Ascending aorta (tissue), 2 donors: ENCODE measurements at regions of chr16 and their contacts with region 1.

Region 1: DNA sequence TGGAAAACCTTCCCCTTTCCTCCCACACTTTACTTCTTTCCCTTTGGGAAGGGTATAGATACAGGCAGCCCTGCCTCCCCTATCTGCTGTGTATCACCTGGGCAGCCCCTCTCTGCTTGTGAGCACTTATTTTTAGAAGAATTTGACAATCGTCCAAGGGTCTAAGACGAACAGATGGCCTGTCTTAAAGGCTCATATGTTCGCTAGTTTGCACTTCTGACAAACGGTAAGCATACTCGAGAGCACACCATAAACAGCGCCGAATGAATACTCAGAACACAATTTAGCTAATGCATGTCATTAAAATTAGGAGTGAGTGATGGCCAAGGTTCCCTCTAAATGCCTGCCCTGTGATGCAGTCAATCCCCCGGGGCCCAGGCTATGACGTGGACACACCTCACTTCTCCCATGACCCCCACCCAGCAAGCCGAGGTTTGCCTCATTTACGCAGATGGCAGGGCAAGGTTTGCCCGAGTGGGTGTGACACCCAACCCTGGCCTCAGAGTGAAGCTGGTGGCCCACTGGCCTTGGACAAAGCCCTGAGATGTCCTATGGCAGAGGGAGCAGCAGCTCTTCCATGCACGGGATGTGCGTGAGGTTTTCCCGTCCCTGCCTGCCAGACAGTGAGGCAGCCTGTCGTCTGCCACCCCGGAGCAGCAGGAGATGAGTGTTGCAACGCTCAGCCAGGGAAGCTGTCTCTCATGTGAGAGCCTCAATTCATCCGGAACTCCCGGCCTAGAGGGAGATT is 125.2 kb downstream of the C16orf78 start:
- DNase-seq: peak in 1 of 2 donors; percentile 55
- H3K4me3 ChIP-seq: no peak overlapping the region
- H3K27ac ChIP-seq: no peak overlapping the region
- H3K4me1 ChIP-seq: no peaks in the 10 kb centered on the region
- H3K27me3 ChIP-seq: no peaks in the 10 kb centered on the region
- CTCF ChIP-seq: no peak

Region 2: GRCh38 chr16:49592546-49593423 is 93.9 kb after region 1 on chr16:
- intact Hi-C with region 1: loop called (anchors 5 kb)
- DNase-seq: peak in 1 of 2 donors; percentile 63
- H3K4me3 ChIP-seq: no peak overlapping the region
- H3K27ac ChIP-seq: no peak overlapping the region
- H3K4me1 ChIP-seq: peaks cover 0 to 6% of the 10 kb centered on the region in 2 donors
- H3K27me3 ChIP-seq: no peaks in the 10 kb centered on the region
- CTCF ChIP-seq: peak; percentile 30 to 65 (median 64)